Endothelial cell of umbilical vein (primary cell): ENCODE measurements at regions of chr10 and their contacts with region 1.

Region 1: GRCh38 chr10:80662577-80663261 is 125.0 kb downstream of the SH2D4B start:
- DNase-seq: peak; percentile 84
- H3K4me3 ChIP-seq: peak overlapping the region in 1 of 3 experiments; percentile 4
- H3K27ac ChIP-seq: no peak overlapping the region
- H3K4me1 ChIP-seq: peaks cover 4% of the 10 kb centered on the region
- H3K27me3 ChIP-seq: peaks cover 0 to 2% of the 10 kb centered on the region in 2 experiments
- CTCF ChIP-seq: peak; percentile 79 to 81
- POLR2A ChIP-seq: no peak

Region 2: GRCh38 chr10:80599424-80599847 is 63.3 kb before region 1 on chr10:
- CTCF ChIA-PET with region 1: interaction called, 47 read pairs
- POLR2A ChIA-PET with region 1: no interaction called
- dilution Hi-C with region 1: no loop called
- intact Hi-C with region 1: no loop called
- DNase-seq: peak; percentile 62
- H3K4me3 ChIP-seq: no peak overlapping the region
- H3K27ac ChIP-seq: no peak overlapping the region
- H3K4me1 ChIP-seq: no peaks in the 10 kb centered on the region
- H3K27me3 ChIP-seq: no peaks in the 10 kb centered on the region
- CTCF ChIP-seq: peak; percentile 73 to 86
- POLR2A ChIP-seq: no peak

Region 3: DNA sequence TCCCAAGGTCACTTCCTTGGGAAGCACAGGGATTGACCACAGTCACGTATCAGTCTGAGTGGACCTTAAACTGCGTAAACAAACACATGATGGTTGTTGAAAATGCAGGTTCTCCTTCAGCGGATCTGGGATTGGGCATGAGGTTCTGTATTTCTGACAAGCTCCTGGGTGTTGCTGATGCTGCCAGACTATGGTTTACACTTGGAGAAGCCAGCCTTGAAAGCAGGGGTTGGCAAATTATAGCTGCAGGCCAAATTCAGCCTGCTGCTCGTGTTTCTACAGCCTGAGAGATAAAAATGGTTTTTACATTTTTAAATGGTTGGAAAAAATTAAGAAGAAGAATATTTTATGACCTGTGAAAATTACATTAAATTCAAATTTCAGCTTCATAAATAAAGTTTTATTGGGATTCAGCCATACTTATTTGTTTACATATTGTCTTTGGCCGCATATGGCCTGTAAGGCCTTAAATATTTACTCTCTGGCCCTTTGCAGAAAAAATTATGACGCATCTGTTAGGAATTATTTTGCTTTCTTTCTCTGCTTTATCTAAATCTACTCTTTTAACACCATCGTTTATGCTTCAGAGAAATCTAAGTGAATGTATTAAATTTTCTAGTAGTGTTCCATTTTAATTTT is 15.4 kb before region 1 on chr10:
- CTCF ChIA-PET with region 1: interaction called, 50 read pairs
- POLR2A ChIA-PET with region 1: no interaction called
- dilution Hi-C with region 1: no loop called
- intact Hi-C with region 1: no loop called
- DNase-seq: no peak
- H3K4me3 ChIP-seq: no peak overlapping the region
- H3K27ac ChIP-seq: no peak overlapping the region
- H3K4me1 ChIP-seq: no peaks in the 10 kb centered on the region
- H3K27me3 ChIP-seq: no peaks in the 10 kb centered on the region
- CTCF ChIP-seq: no peak
- POLR2A ChIP-seq: no peak

Region 4: DNA sequence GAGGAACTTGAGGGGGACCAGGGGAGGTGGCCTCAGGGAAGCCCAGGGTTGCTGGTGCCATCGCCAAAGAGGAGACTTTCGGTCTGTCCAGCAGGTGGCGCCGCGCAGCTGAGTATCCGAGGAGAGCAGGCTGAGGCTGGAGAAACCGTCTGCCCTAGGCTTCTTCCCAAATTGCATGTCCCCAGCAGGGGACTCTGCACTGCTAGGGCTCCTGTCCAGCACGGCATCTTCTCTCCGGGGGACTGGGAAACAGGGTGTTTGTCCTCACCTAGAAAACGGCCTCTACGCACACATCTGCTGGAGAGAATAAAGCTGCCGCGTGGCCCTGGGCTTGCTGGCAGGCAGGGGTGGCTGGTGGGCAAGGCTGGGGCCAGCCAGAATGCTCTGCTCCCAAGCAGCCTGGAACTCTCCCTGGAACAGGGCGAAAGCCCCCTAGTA is 36.9 kb after region 1 on chr10:
- CTCF ChIA-PET with region 1: interaction called, 19 read pairs
- POLR2A ChIA-PET with region 1: no interaction called
- dilution Hi-C with region 1: no loop called
- intact Hi-C with region 1: no loop called
- DNase-seq: peak; percentile 58
- H3K4me3 ChIP-seq: no peak overlapping the region
- H3K27ac ChIP-seq: no peak overlapping the region
- H3K4me1 ChIP-seq: no peaks in the 10 kb centered on the region
- H3K27me3 ChIP-seq: no peaks in the 10 kb centered on the region
- CTCF ChIP-seq: peak; percentile 74 to 92
- POLR2A ChIP-seq: no peak

Region 5: DNA sequence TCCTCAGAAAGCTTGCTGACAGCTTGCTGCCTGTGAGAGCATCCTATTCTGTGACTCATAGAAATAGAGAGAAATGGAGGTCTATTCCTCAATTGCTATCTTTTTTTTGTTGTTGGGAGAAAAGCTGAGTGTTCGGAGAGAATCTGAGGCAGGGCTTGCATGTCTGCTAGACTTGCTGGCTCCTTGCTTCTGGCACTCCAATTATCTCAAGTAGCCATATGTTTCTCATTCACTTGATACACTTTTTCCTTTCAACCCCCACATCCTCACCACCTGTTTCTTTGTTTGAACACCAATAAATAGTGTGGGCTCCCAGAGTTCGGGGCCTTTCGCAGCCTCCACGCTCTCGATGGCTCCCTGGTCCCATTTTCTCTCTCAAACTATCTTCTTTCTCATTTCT is 47.1 kb after region 1 on chr10:
- CTCF ChIA-PET with region 1: interaction called, 10 read pairs
- POLR2A ChIA-PET with region 1: no interaction called
- dilution Hi-C with region 1: no loop called
- intact Hi-C with region 1: no loop called
- DNase-seq: no peak
- H3K4me3 ChIP-seq: no peak overlapping the region
- H3K27ac ChIP-seq: no peak overlapping the region
- H3K4me1 ChIP-seq: no peaks in the 10 kb centered on the region
- H3K27me3 ChIP-seq: peaks cover 0 to 2% of the 10 kb centered on the region in 2 experiments
- CTCF ChIP-seq: no peak
- POLR2A ChIP-seq: no peak

Region 6: DNA sequence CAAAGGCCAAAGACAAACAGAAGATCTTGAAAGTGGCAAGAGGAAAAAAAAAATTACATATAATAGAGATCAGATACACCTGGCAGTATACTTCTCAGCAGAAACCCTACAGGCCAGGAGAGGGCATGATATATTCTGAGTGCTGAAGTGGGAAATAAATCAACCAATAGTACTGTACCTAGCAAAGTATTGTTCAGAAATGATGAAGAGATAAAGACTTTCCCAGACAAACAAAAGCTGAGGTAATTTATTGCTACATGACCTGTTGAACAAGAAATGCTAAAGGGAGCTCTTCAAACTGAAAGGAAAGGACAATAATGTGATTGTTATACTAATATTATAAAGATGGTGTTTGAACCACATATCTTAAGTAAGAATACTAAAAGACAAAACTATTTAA is 166.9 kb after region 1 on chr10:
- CTCF ChIA-PET with region 1: no interaction called
- POLR2A ChIA-PET with region 1: no interaction called
- dilution Hi-C with region 1: no loop called
- intact Hi-C with region 1: no loop called
- DNase-seq: no peak
- H3K4me3 ChIP-seq: no peak overlapping the region
- H3K27ac ChIP-seq: no peak overlapping the region
- H3K4me1 ChIP-seq: no peaks in the 10 kb centered on the region
- H3K27me3 ChIP-seq: no peaks in the 10 kb centered on the region
- CTCF ChIP-seq: no peak
- POLR2A ChIP-seq: no peak

Region 7: DNA sequence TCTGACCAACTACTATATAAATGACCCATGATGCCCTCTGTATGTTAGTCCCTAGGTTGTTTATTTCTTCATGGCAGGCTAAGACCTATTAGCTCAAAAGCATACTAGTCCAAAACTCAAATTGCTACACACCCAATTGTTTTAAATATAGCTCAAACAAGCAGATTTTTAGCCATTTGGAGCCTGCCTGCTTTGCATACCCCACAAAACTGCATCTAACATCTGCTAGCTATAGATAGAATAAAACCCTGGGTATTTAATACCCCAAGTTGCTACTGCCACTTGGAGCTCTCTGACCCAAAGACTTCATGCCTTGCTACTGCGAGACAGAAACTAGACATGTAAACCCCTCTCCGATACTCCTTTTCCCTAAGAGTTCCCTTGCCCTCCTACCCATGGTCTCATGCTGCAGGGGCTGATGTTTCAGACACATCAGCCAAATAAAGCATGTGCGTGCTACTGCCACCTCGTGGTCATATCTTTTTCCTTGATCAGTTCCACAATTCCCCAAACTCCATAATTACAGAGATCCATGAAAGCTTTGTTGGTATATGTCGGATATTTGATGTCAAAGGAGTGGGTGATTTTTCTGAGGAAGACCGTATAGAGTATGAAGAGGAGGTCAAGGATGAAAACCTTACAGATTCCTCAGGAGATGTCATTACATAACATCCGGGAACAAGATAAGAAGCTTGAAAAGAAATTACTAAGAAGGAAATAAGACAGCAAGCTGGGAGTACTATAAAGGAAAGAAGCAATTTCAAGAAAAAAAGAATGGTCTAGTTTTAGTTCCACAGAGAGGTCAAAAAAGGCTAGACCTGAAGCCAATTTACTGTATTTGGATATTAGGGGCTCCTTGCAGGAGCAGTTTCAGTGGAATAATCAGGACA is 261.6 kb after region 1 on chr10:
- CTCF ChIA-PET with region 1: interaction called, 76 read pairs
- POLR2A ChIA-PET with region 1: no interaction called
- dilution Hi-C with region 1: no loop called
- intact Hi-C with region 1: loop called (anchors 1 kb)
- DNase-seq: peak; percentile 56
- H3K4me3 ChIP-seq: no peak overlapping the region
- H3K27ac ChIP-seq: no peak overlapping the region
- H3K4me1 ChIP-seq: no peaks in the 10 kb centered on the region
- H3K27me3 ChIP-seq: peaks cover 0 to 4% of the 10 kb centered on the region in 2 experiments
- CTCF ChIP-seq: peak; percentile 46 to 63
- POLR2A ChIP-seq: no peak

Region 8: DNA sequence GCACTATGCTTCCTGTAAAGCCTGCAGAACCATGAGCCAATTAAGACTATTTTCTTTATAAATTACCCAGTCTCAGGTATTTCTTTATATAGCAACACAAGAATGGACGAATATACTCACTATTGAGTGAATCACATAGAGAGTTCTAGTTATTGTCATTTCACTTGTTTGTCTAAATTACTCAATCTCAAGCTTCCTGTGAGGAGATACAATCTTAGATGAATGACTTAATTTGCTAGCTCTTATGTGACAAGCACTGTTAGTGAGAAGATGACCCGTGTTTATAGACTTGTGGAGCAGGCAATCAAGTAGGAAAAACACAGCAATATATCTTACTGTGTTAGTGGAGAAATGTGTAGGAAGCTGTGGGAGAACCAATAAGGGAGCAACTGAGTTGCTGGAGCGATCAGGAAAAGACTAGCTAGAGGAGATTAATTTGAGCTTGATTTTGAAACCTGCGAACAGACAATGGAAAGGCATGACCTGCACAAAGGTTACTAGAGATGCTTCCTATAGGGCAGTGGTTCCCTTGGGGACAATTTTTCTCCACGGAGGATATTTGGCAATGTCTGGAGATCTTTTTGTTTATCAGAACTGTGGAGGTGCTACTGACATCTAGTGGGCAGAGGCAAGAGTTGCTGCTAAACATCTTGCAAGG is 356.1 kb after region 1 on chr10:
- CTCF ChIA-PET with region 1: interaction called, 21 read pairs
- POLR2A ChIA-PET with region 1: no interaction called
- dilution Hi-C with region 1: no loop called
- intact Hi-C with region 1: loop called (anchors 2 kb)
- DNase-seq: peak; percentile 53
- H3K4me3 ChIP-seq: no peak overlapping the region
- H3K27ac ChIP-seq: no peak overlapping the region
- H3K4me1 ChIP-seq: no peaks in the 10 kb centered on the region
- H3K27me3 ChIP-seq: no peaks in the 10 kb centered on the region
- CTCF ChIP-seq: peak; percentile 68 to 77
- POLR2A ChIP-seq: no peak